ENCODE measurements at regions of chr1 and their contacts with region 1.

Region 1: GRCh38 chr1:24744911-24745710 is at the start of gene CLIC4:
- DNase-seq: peak; percentile 100
- ATAC-seq: peak; percentile 93
- H3K4me3 Mint-ChIP-seq: peak within 1 kb of the TSS; percentile 90
- H3K27ac Mint-ChIP-seq: peak within 1 kb of the TSS; percentile 90
- H3K4me1 Mint-ChIP-seq: peaks cover 44% of the 10 kb centered on the region
- H3K27me3 Mint-ChIP-seq: no peaks in the 10 kb centered on the region
- total RNA-seq, gene CLIC4: 29.8 to 33.1 TPM

Region 2: GRCh38 chr1:24321697-24322469 is 423.2 kb before region 1 on chr1:
- CTCF ChIA-PET with region 1: no interaction called
- POLR2A ChIA-PET with region 1: no interaction called
- intact Hi-C with region 1: loop called in 1 of 2 experiments (anchors 5 kb)
- DNase-seq: peak; percentile 87
- ATAC-seq: peak; percentile 76
- H3K4me3 Mint-ChIP-seq: peak overlapping the region; percentile 62
- H3K27ac Mint-ChIP-seq: peak overlapping the region; percentile 51
- H3K4me1 Mint-ChIP-seq: peaks cover 40% of the 10 kb centered on the region
- H3K27me3 Mint-ChIP-seq: peaks cover 70% of the 10 kb centered on the region

Region 3: DNA sequence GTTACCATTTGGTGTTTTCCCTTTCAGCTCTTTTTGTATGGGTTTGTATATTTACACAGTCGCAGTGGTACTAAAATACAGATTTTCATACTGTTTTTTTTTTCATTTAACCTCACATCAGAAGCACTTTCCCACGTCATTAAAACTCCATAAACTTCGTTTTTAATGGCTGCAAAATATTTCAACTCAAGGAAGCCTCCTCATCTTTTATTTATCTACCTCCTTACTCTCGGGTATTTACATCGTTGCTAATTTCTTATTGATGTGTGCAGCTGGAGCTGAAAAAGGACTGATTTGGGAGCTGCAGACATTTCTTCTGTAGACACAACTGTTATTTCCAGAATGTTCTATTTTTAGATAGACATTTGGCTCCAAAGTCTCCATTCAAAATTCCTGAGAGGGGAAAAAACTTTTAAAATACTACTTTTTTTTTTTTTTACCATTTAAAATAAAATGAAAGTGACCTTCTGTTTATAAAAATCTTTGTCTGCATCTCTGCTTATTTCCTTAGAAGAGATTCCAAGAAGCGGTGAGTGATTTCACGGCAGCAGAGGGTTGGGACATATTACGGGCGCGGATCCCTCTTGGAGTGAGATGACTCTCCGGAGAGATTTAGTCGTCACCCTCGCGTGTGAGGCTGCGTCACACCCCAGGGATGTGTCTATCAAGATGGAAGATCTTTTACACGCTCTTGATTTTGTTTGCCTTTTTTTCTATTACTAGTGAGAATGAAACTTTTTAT is 174.9 kb after region 1 on chr1:
- CTCF ChIA-PET with region 1: no interaction called
- POLR2A ChIA-PET with region 1: no interaction called
- intact Hi-C with region 1: loop called in 1 of 2 experiments (anchors 2 kb)
- DNase-seq: peak; percentile 90
- ATAC-seq: peak; percentile 38
- H3K4me3 Mint-ChIP-seq: peak overlapping the region; percentile 54
- H3K27ac Mint-ChIP-seq: peak overlapping the region; percentile 97
- H3K4me1 Mint-ChIP-seq: peaks cover 69% of the 10 kb centered on the region
- H3K27me3 Mint-ChIP-seq: no peaks in the 10 kb centered on the region

Region 4: DNA sequence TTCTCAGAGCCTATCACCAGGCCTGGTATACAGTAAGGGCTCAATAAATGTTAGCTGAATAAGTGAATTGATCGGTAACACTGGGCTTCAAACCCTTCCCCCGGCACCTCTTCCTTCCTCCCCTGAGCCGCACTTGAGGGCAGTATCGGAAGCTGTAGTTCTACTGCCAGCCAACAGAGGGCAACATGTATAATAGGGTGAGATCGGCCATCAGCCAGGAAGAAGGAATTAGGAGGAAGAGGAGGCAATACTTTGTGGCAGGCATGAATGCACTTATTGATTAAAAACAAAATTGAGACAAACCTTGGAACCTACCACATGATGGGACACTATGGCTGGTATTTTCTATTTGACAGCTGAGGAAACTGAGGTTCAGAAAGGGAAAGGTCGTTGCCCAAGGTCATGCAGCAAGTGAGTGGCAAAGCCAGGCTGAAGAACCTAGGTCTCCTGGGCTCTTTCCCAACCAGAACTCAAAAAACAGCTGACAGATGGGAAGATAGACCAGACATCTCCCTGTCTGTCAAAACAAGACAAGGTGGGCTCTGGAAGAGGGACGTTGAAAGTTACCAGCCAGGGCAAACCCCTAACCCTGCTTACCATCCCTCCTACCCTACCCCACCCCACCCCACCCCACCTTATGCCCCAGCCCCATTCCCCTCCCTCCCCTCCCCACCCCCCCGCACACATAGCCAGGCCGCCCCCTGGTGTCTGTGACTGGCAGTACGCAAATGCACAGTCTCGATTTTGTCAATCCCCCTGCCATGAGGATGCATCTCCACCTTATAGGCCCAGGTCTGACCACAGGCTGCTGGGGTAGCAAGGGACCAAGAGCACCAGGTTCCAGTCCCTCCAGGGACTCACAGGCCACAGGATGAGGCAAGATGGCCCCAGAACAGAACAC is 292.3 kb after region 1 on chr1:
- CTCF ChIA-PET with region 1: no interaction called
- POLR2A ChIA-PET with region 1: no interaction called
- intact Hi-C with region 1: loop called in 1 of 2 experiments (anchors 2 kb)
- DNase-seq: peak; percentile 86
- ATAC-seq: peak; percentile 55
- H3K4me3 Mint-ChIP-seq: no peak overlapping the region
- H3K27ac Mint-ChIP-seq: peak overlapping the region; percentile 27
- H3K4me1 Mint-ChIP-seq: peaks cover 35% of the 10 kb centered on the region
- H3K27me3 Mint-ChIP-seq: no peaks in the 10 kb centered on the region

Region 5: GRCh38 chr1:25338188-25338981 is 593.3 kb after region 1 on chr1 and contains the start of gene TMEM50A:
- CTCF ChIA-PET with region 1: no interaction called
- POLR2A ChIA-PET with region 1: no interaction called
- intact Hi-C with region 1: loop called in 1 of 2 experiments (anchors 10 kb)
- DNase-seq: peak; percentile 93
- ATAC-seq: peak; percentile 76
- H3K4me3 Mint-ChIP-seq: peak within 1 kb of the TSS; percentile 94
- H3K27ac Mint-ChIP-seq: peak within 1 kb of the TSS; percentile 93
- H3K4me1 Mint-ChIP-seq: peaks cover 31% of the 10 kb centered on the region
- H3K27me3 Mint-ChIP-seq: no peaks in the 10 kb centered on the region
- total RNA-seq, gene TMEM50A: 98.0 to 120 TPM

Region 6: DNA sequence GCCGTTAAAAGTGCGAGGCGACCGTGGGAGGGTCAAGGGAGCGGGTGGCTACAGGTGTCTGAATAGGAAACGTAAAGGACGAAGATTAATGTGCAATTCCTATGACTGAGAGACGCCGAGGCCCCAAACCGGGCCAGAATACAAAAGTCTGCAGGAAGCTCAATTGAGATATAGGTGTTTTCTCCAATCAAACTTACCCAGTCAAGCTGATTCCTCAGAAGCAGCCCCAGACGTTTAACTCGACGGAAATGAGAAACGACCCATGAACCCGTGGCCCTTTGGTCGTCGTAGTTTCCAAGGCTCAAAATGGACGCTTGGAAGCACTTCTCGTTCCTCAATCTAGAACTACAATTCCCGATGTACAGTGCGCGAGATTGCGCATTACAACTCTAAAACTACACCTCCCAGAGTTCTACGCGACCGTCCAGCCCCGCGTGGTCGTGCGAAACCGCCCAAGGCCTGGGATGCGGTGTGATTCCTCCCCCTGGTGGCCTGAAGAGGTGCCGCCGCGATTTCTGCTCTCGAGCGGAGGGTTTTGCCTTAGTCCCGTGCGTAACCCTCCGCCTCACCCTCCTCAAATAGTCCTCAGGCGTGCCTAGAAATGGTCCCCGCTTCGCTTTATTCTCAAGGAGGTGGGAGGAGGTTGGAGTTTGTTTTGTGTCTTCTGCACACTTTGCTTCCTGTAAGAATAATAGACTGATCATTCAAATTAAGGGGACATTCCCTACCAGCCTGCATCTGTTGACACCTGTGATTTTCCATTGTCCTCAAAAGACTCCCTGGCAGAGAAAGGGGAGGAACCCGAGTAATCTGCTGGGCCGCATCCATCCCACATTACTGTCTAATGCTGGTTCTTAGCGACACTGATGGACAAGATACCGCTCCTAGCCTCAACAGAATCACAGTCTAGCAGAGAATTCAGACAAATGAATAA is 1253.0 kb after region 1 on chr1 and contains the start of gene PAFAH2:
- CTCF ChIA-PET with region 1: no interaction called
- POLR2A ChIA-PET with region 1: no interaction called
- intact Hi-C with region 1: loop called in 1 of 2 experiments (anchors 5 kb)
- DNase-seq: peak; percentile 99
- ATAC-seq: peak; percentile 98
- H3K4me3 Mint-ChIP-seq: peak within 1 kb of the TSS; percentile 98
- H3K27ac Mint-ChIP-seq: peak within 1 kb of the TSS; percentile 98
- H3K4me1 Mint-ChIP-seq: peaks cover 28% of the 10 kb centered on the region
- H3K27me3 Mint-ChIP-seq: no peaks in the 10 kb centered on the region
- total RNA-seq, gene PAFAH2: 6.6 to 7.9 TPM

Measured in activated CD4-positive, alpha-beta T cell treated with anti-CD3 and anti-CD28 coated beads for 36 hours (primary cell).